HepG2 (cell line): ENCODE measurements at regions of chr16 and their contacts with region 1.

Region 1: GRCh38 chr16:30844671-30845449 is 49.0 kb downstream of the BCL7C start:
- DNase-seq: peak; percentile 97
- ATAC-seq: peak; percentile 86
- H3K4me3 ChIP-seq: peak overlapping the region; percentile 32 to 66 (median 45)
- H3K27ac ChIP-seq: peak overlapping the region; percentile 64
- H3K4me1 ChIP-seq: peaks cover 33% of the 10 kb centered on the region
- H3K27me3 ChIP-seq: no peaks in the 10 kb centered on the region
- CTCF ChIP-seq: peak; percentile 96
- EP300 ChIP-seq: no peak; a peak in 1 of 4 replicates
- POLR2A ChIP-seq: peak; percentile 23 to 44; a peak in 3 of 4 replicates
- RAD21 ChIP-seq: peak; percentile 89

Region 2: GRCh38 chr16:30829130-30830071 is 15.5 kb before region 1 on chr16:
- CTCF ChIA-PET with region 1: no interaction called
- POLR2A ChIA-PET with region 1: interaction called, 14 read pairs
- in situ Hi-C with region 1: no loop called
- intact Hi-C with region 1: no loop called
- DNase-seq: peak; percentile 68
- ATAC-seq: peak; percentile 84
- H3K4me3 ChIP-seq: peak overlapping the region; percentile 2 to 48 (median 19); a peak in 3 of 6 replicates
- H3K27ac ChIP-seq: peak overlapping the region; percentile 33
- H3K4me1 ChIP-seq: peaks cover 50% of the 10 kb centered on the region
- H3K27me3 ChIP-seq: no peaks in the 10 kb centered on the region
- CTCF ChIP-seq: peak; percentile 61
- EP300 ChIP-seq: no peak
- POLR2A ChIP-seq: no peak
- RAD21 ChIP-seq: no peak

Region 3: GRCh38 chr16:30893744-30894539 is 49.1 kb after region 1 on chr16 and contains the start of gene BCL7C:
- CTCF ChIA-PET with region 1: interaction called, 10 read pairs
- POLR2A ChIA-PET with region 1: interaction called, 8 read pairs
- in situ Hi-C with region 1: loop called (anchors 10 kb)
- intact Hi-C with region 1: loop called (anchors 2 kb)
- DNase-seq: peak; percentile 90
- ATAC-seq: peak; percentile 82
- H3K4me3 ChIP-seq: peak within 1 kb of the TSS; percentile 72 to 100 (median 84)
- H3K27ac ChIP-seq: peak within 1 kb of the TSS; percentile 65
- H3K4me1 ChIP-seq: peaks cover 56% of the 10 kb centered on the region
- H3K27me3 ChIP-seq: no peaks in the 10 kb centered on the region
- CTCF ChIP-seq: peak; percentile 93
- EP300 ChIP-seq: no peak
- POLR2A ChIP-seq: peak; percentile 52 to 86; a peak in 3 of 4 replicates
- RAD21 ChIP-seq: peak; percentile 71
- total RNA-seq, gene BCL7C: 20.6 and 33.8 TPM in 2 replicates

Region 4: GRCh38 chr16:30902029-30902972 is 57.4 kb after region 1 on chr16:
- CTCF ChIA-PET with region 1: interaction called, 25 read pairs
- POLR2A ChIA-PET with region 1: interaction called, 29 read pairs
- in situ Hi-C with region 1: loop called (anchors 10 kb)
- intact Hi-C with region 1: loop called (anchors 2 kb)
- DNase-seq: peak; percentile 33
- ATAC-seq: peak; percentile 87
- H3K4me3 ChIP-seq: peak overlapping the region; percentile 58 to 77 (median 60)
- H3K27ac ChIP-seq: peak overlapping the region; percentile 65
- H3K4me1 ChIP-seq: peaks cover 75% of the 10 kb centered on the region
- H3K27me3 ChIP-seq: no peaks in the 10 kb centered on the region
- CTCF ChIP-seq: peak; percentile 28; the same call in 1 of the 2 replicates
- EP300 ChIP-seq: no peak; a peak in 1 of 4 replicates
- POLR2A ChIP-seq: peak; percentile 49 to 70; a peak in 3 of 4 replicates
- RAD21 ChIP-seq: peak; percentile 95

Region 5: GRCh38 chr16:30922960-30923535 is 78.2 kb after region 1 on chr16:
- CTCF ChIA-PET with region 1: interaction called, 19 read pairs
- POLR2A ChIA-PET with region 1: interaction called, 7 read pairs
- in situ Hi-C with region 1: loop called (anchors 5 kb)
- intact Hi-C with region 1: loop called (anchors 1 kb)
- DNase-seq: peak; percentile 99
- ATAC-seq: peak; percentile 84
- H3K4me3 ChIP-seq: peak overlapping the region; percentile 65 to 87 (median 76)
- H3K27ac ChIP-seq: peak overlapping the region; percentile 87
- H3K4me1 ChIP-seq: peaks cover 19% of the 10 kb centered on the region
- H3K27me3 ChIP-seq: no peaks in the 10 kb centered on the region; a peak in 1 of 5 replicates
- CTCF ChIP-seq: peak; percentile 10; the same call in 1 of the 2 replicates
- EP300 ChIP-seq: no peak
- POLR2A ChIP-seq: peak; percentile 66 to 86
- RAD21 ChIP-seq: no peak; the same call in 1 of the 2 replicates